Activated CD4-positive, alpha-beta memory T cell treated with anti-CD3 and anti-CD28 coated beads for 36 hours (primary cell): ENCODE measurements at regions of chr10 and their contacts with region 1.

Region 1: DNA sequence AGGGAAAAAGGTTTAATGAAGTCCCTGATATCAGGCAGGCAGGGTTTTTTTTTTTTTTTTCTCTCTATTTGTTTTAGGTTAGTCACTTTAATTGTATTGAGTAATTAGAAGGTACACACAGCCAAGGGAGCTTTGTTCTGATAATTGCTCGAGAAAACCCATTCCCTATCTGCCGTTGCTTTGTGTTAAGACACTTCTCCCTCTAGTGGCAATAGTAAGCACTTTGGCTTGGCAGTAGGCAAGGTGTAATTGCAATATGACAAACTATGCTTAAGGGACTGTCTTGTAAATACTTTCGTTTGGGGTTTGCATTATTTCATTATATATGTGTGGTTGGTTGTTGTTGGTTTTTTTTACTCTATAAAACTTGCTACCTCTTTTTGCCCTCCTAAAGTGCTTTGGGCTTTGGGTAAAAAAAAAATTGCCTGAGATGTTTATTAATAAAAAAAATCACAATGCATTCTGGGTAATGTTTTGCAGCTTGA is 113.4 kb downstream of the BTRC start:
- DNase-seq: peak; percentile 15
- H3K4me3 Mint-ChIP-seq: no peak overlapping the region
- H3K27ac Mint-ChIP-seq: no peak overlapping the region
- H3K4me1 Mint-ChIP-seq: peaks cover 2% of the 10 kb centered on the region
- H3K27me3 Mint-ChIP-seq: no peaks in the 10 kb centered on the region

Region 2: GRCh38 chr10:101291331-101292193 is 175.8 kb before region 1 on chr10:
- CTCF ChIA-PET with region 1: interaction called, 11 read pairs
- POLR2A ChIA-PET with region 1: no interaction called
- intact Hi-C with region 1: no loop called
- DNase-seq: peak; percentile 58
- H3K4me3 Mint-ChIP-seq: peak overlapping the region; percentile 66
- H3K27ac Mint-ChIP-seq: no peak overlapping the region
- H3K4me1 Mint-ChIP-seq: peaks cover 5% of the 10 kb centered on the region
- H3K27me3 Mint-ChIP-seq: peaks cover 65% of the 10 kb centered on the region

Region 3: DNA sequence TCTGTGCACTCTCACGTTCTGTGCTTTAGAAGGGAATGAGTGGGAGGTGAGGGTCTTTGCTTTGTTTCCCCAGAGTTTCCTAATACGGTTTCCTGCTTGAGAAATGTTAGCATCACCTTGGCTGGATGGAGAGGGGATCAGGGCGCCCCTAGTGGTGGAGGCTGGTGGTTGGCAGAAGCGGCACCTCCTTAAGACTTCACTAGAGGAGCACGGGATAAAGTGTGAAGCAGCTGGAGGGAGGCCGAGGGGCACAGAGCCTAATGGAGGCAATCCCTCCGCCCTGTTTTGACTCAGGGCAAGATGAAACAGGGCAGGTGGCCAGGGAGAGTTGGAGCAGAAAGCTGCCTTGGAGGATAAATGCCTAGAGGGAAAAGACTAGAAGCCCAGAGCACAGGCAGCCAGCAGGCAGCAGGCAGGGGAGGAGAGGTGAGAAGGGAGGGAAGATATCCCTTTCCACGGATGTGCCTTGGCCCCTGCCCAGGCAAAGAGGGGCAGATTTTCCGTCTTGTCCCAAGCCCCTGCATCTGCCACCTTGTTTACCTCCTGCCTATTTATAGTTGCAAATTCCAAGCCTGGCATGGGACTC is 169.3 kb before region 1 on chr10:
- CTCF ChIA-PET with region 1: interaction called, 15 read pairs
- POLR2A ChIA-PET with region 1: no interaction called
- intact Hi-C with region 1: no loop called
- DNase-seq: peak; percentile 84
- H3K4me3 Mint-ChIP-seq: no peak overlapping the region
- H3K27ac Mint-ChIP-seq: no peak overlapping the region
- H3K4me1 Mint-ChIP-seq: no peaks in the 10 kb centered on the region
- H3K27me3 Mint-ChIP-seq: peaks cover 39% of the 10 kb centered on the region

Region 4: DNA sequence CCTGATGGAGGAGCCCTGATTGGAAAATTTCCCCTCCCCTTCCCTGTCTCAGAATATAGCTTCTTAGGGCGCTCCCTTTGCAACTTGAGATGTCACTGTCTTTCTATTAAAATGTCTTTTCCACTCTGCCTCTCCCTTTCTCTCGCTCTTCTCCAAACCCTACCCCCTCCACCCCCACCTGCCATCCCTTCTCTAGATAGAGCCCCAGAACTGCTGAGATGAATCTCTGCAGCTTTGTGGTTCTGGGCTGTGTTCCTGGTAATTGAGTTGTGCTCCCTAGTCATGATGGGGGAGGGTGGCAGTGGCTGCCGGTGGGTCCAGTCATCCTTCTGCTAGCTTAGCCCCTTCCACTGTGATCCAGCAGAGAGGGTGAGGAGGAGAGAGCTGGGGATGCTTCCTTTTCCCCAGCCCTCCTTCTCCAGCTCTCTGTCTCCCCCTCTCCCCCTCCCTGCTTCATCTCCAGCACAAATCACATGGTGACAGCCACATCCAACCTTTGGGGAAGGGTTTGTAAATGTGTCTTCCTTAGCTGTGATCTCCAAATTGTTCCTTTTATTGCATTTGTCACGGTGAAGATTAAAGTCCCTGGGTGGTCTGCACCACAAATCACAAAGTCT is 164.1 kb before region 1 on chr10:
- CTCF ChIA-PET with region 1: interaction called, 15 read pairs
- POLR2A ChIA-PET with region 1: no interaction called
- intact Hi-C with region 1: no loop called
- DNase-seq: no peak
- H3K4me3 Mint-ChIP-seq: no peak overlapping the region
- H3K27ac Mint-ChIP-seq: no peak overlapping the region
- H3K4me1 Mint-ChIP-seq: no peaks in the 10 kb centered on the region
- H3K27me3 Mint-ChIP-seq: peaks cover 22% of the 10 kb centered on the region

Region 5: DNA sequence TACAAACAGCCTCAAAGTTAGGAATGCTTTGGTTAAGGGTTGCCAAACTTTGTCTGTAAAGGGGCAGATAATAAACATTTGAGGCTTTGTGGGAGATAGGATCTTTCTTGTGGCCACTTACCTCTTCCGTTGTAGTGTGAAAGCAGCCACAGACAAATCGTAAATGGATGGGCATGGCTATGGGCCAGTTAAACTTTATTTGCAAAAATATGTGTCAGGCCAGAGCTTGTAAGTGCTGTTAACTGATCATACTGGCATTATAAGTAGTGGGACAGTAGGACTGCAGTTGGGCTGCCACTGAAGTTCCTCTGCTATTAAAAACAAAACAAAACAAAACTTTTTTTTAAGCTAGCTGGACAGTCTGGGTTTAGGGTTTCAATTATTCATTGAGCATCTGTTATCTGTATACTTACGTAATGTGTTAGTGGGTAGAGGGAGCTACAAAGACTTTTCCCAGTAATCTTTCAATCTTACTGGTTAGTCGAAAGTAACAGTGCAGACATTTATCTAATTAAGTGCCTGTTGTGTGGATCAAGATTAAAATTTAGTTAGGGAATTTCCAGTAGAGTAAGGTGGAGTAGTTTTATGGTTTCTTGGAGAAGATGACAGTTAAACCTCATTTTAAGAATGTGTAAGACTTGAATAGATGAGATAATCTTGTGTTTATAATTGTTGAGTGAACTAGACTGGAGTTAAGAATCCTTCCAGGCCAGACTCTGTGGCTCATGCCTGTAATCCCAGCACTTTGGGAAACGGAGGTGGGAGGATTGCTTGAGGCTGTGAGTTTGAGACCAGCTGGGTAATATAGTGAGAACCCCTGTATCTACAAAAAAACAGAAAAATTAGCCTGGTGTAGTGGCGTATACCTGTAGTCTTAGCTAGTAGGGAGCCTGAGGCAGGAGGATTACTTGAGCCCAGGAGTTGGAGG is 13.3 kb before region 1 on chr10:
- CTCF ChIA-PET with region 1: interaction called, 13 read pairs
- POLR2A ChIA-PET with region 1: interaction called, 3 read pairs
- intact Hi-C with region 1: no loop called
- DNase-seq: no peak
- H3K4me3 Mint-ChIP-seq: no peak overlapping the region
- H3K27ac Mint-ChIP-seq: no peak overlapping the region
- H3K4me1 Mint-ChIP-seq: peaks cover 27% of the 10 kb centered on the region
- H3K27me3 Mint-ChIP-seq: no peaks in the 10 kb centered on the region